PC-9 (cell line): ENCODE measurements at regions of chr18 and their contacts with region 1.

Region 1: GRCh38 chr18:9136315-9137155 is at the start of gene ANKRD12:
- DNase-seq: peak; percentile 85 to 100
- H3K4me3 ChIP-seq: peak within 1 kb of the TSS; percentile 80
- H3K27ac ChIP-seq: peak within 1 kb of the TSS; percentile 90
- H3K4me1 ChIP-seq: peaks cover 65% of the 10 kb centered on the region
- H3K27me3 ChIP-seq: no peaks in the 10 kb centered on the region
- CTCF ChIP-seq: no peak
- total RNA-seq, gene ANKRD12: 26.9 and 31.6 TPM in 2 replicates

Region 2: DNA sequence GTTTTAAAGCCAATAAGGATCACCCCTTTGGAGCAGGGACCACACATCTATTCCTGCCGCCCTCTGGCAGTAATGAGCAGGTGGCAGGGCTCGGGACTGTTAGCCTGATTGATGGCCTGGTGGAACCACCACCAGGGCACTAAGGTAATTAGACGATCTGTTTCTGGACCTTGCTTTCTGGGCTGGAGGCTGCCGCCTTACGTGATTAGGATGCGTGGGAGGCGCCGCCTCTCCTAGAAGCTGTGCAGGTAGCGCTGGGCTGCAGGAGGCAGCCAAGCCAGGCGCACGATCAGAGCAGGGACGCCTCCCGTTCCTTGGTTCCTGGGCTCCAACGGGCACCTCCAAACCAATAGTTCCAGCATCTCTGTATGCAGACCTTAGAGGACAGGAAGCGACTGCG is 769.9 kb before region 1 on chr18:
- CTCF ChIA-PET with region 1: no interaction called
- POLR2A ChIA-PET with region 1: no interaction called
- intact Hi-C with region 1: no loop called
- DNase-seq: no peak
- H3K4me3 ChIP-seq: no peak overlapping the region
- H3K27ac ChIP-seq: no peak overlapping the region
- H3K4me1 ChIP-seq: no peaks in the 10 kb centered on the region
- H3K27me3 ChIP-seq: no peaks in the 10 kb centered on the region
- CTCF ChIP-seq: no peak

Region 3: GRCh38 chr18:8608795-8609658 is 527.5 kb before region 1 on chr18 and contains the start of gene RAB12:
- CTCF ChIA-PET with region 1: no interaction called
- POLR2A ChIA-PET with region 1: no interaction called
- intact Hi-C with region 1: loop called (anchors 5 kb)
- DNase-seq: peak; percentile 50 to 86
- H3K4me3 ChIP-seq: peak within 1 kb of the TSS; percentile 98
- H3K27ac ChIP-seq: peak within 1 kb of the TSS; percentile 79; the same call in 1 of the 2 replicates
- H3K4me1 ChIP-seq: peaks cover 41% of the 10 kb centered on the region
- H3K27me3 ChIP-seq: no peaks in the 10 kb centered on the region
- CTCF ChIP-seq: peak; percentile 58
- total RNA-seq, gene RAB12: 60.1 and 79.4 TPM in 2 replicates

Region 4: GRCh38 chr18:9102508-9103375 is 33.8 kb before region 1 on chr18 and contains the start of gene NDUFV2:
- CTCF ChIA-PET with region 1: no interaction called
- POLR2A ChIA-PET with region 1: no interaction called
- intact Hi-C with region 1: loop called (anchors 1 kb)
- DNase-seq: peak; percentile 81 to 99
- H3K4me3 ChIP-seq: peak within 1 kb of the TSS; percentile 100
- H3K27ac ChIP-seq: peak within 1 kb of the TSS; percentile 86
- H3K4me1 ChIP-seq: peaks cover 40% of the 10 kb centered on the region
- H3K27me3 ChIP-seq: no peaks in the 10 kb centered on the region
- CTCF ChIP-seq: no peak
- total RNA-seq, gene NDUFV2: 182 and 215 TPM in 2 replicates

Region 5: GRCh38 chr18:9177031-9177430 is 40.5 kb after region 1 on chr18:
- CTCF ChIA-PET with region 1: no interaction called
- POLR2A ChIA-PET with region 1: no interaction called
- intact Hi-C with region 1: no loop called
- DNase-seq: no peak
- H3K4me3 ChIP-seq: no peak overlapping the region
- H3K27ac ChIP-seq: no peak overlapping the region
- H3K4me1 ChIP-seq: no peaks in the 10 kb centered on the region
- H3K27me3 ChIP-seq: no peaks in the 10 kb centered on the region
- CTCF ChIP-seq: no peak

Region 6: GRCh38 chr18:9334329-9334972 is 197.9 kb after region 1 on chr18 and contains the start of gene TWSG1:
- CTCF ChIA-PET with region 1: no interaction called
- POLR2A ChIA-PET with region 1: no interaction called
- intact Hi-C with region 1: loop called (anchors 1 kb)
- DNase-seq: peak; percentile 75 to 97
- H3K4me3 ChIP-seq: peak within 1 kb of the TSS; percentile 100
- H3K27ac ChIP-seq: no peak within 1 kb of the TSS
- H3K4me1 ChIP-seq: peaks cover 23% of the 10 kb centered on the region
- H3K27me3 ChIP-seq: no peaks in the 10 kb centered on the region
- CTCF ChIP-seq: peak; percentile 37
- total RNA-seq, gene TWSG1: 52.1 and 55.8 TPM in 2 replicates

Region 7: DNA sequence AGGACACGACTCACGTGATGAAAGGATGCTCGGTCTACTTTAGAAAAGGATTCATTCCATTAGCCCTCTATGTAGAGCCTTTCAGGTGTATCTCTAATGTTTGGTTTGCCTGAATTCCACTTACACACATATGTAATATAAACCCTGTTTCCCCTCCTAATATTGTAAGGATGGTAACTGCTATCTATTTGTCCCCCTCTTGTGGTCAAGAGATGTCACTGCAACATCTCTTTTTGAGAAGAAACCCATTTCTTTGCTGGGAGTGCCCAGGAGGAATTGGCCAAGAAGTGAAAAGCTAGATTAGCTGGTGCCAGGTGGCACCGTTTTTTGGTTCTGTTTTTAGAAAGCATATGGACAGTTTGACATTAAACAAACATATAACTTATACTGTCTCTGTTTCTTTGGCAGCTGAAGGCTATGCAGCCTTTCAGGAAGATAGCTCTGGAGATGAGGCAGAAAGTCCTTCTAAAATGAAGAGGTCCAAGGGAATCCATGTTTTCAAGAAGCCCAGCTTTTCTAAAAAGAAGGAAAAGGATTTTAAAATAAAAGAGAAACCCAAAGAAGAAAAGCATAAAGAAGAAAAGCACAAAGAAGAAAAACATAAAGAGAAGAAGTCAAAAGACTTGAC is 380.0 kb after region 1 on chr18:
- CTCF ChIA-PET with region 1: no interaction called
- POLR2A ChIA-PET with region 1: no interaction called
- intact Hi-C with region 1: loop called (anchors 1 kb)
- DNase-seq: no peak
- H3K4me3 ChIP-seq: no peak overlapping the region
- H3K27ac ChIP-seq: no peak overlapping the region
- H3K4me1 ChIP-seq: peaks cover 29% of the 10 kb centered on the region
- H3K27me3 ChIP-seq: no peaks in the 10 kb centered on the region
- CTCF ChIP-seq: peak; percentile 90

Region 8: GRCh38 chr18:9683407-9684396 is 547.2 kb after region 1 on chr18:
- CTCF ChIA-PET with region 1: no interaction called
- POLR2A ChIA-PET with region 1: no interaction called
- intact Hi-C with region 1: loop called (anchors 10 kb)
- DNase-seq: peak; percentile 75 to 76
- H3K4me3 ChIP-seq: peak overlapping the region; percentile 15; the same call in 1 of the 2 replicates
- H3K27ac ChIP-seq: peak overlapping the region; percentile 56
- H3K4me1 ChIP-seq: peaks cover 32% of the 10 kb centered on the region
- H3K27me3 ChIP-seq: no peaks in the 10 kb centered on the region
- CTCF ChIP-seq: peak; percentile 62